ENCODE measurements at regions of chr7 and their contacts with region 1.

Region 1: GRCh38 chr7:149090397-149091195 is at the start of gene ZNF786:
- DNase-seq: peak; percentile 70 to 73
- ATAC-seq: peak; percentile 91 to 94
- H3K4me3 ChIP-seq: peak within 1 kb of the TSS; percentile 95 to 99 (median 96)
- H3K27ac ChIP-seq: peak within 1 kb of the TSS; percentile 90 to 100 (median 94)
- H3K4me1 ChIP-seq: peaks cover 6 to 10% of the 10 kb centered on the region in 2 donors
- H3K27me3 ChIP-seq: no peaks in the 10 kb centered on the region
- CTCF ChIP-seq: peak; percentile 86 to 98 (median 94)
- POLR2A ChIP-seq: peak; percentile 67 to 81
- total RNA-seq, gene ZNF786: 1.9 to 6.1 (median 2.7) TPM

Region 2: GRCh38 chr7:148698397-148699023 is 392.1 kb before region 1 on chr7 and contains the start of gene CUL1:
- in situ Hi-C with region 1: no loop called
- intact Hi-C with region 1: loop called (anchors 5 kb)
- DNase-seq: peak; percentile 75 to 82
- ATAC-seq: peak; percentile 74 to 82
- H3K4me3 ChIP-seq: peak within 1 kb of the TSS; percentile 56 to 81 (median 72)
- H3K27ac ChIP-seq: peak within 1 kb of the TSS; percentile 85 to 96 (median 92)
- H3K4me1 ChIP-seq: peaks cover 34 to 35% of the 10 kb centered on the region in 2 donors
- H3K27me3 ChIP-seq: no peaks in the 10 kb centered on the region
- CTCF ChIP-seq: no peak
- POLR2A ChIP-seq: peak; percentile 68 to 72
- total RNA-seq, gene CUL1: 78.7 to 101 (median 84.6) TPM

Region 3: DNA sequence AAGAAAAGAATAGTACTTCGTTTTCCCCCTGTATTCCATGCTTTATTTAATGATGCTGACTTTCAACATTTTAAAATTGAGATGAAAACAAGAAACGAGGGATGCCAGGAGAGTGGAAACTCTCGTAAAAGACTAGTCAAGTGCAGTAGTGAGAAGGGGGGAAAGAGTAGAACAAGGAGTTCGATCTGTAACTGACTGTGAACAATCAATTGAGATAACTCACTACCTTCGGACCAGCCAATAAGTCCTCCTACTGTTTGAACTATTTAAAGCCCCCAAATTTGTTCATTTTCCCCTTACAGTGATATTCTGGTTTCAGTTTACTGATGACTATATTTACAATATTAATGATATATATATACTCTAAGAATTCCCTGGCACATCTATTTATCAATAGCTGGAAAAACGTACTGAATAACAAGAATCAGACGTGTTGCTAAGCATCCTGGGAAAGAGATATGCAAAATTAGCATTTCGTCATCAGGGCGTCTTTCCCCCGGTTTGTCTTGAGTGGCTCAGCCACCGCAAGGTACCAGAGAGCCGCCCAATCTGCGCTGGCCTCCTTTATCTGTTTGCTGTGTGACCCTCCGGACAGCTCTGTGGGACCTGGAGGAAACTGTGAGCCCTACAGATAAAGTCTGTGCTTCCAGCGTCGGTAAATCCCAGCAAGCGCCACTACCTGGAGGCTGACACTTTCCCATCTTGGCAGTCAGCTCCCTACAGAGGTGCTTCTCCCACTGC is 103.4 kb before region 1 on chr7:
- in situ Hi-C with region 1: no loop called
- intact Hi-C with region 1: loop called (anchors 1 kb)
- DNase-seq: peak; percentile 73 to 76
- ATAC-seq: peak; percentile 92 to 94
- H3K4me3 ChIP-seq: peak overlapping the region; percentile 68 to 85 (median 70)
- H3K27ac ChIP-seq: peak overlapping the region; percentile 70 to 82 (median 76)
- H3K4me1 ChIP-seq: peaks cover 24 to 37% of the 10 kb centered on the region in 2 donors
- H3K27me3 ChIP-seq: no peaks in the 10 kb centered on the region
- CTCF ChIP-seq: no peak
- POLR2A ChIP-seq: no peak

Region 4: GRCh38 chr7:149028346-149029109 is 62.1 kb before region 1 on chr7 and contains the start of gene PDIA4:
- in situ Hi-C with region 1: loop called in 1 of 4 experiments (anchors 5 kb)
- intact Hi-C with region 1: loop called (anchors 1 kb)
- DNase-seq: peak; percentile 99
- ATAC-seq: peak; percentile 97
- H3K4me3 ChIP-seq: peak within 1 kb of the TSS; percentile 70 to 93 (median 86)
- H3K27ac ChIP-seq: peak within 1 kb of the TSS; percentile 83 to 98 (median 94)
- H3K4me1 ChIP-seq: peaks cover 16 to 21% of the 10 kb centered on the region in 2 donors
- H3K27me3 ChIP-seq: no peaks in the 10 kb centered on the region
- CTCF ChIP-seq: peak in 4 of 5 experiments; percentile 34 to 44 (median 40)
- POLR2A ChIP-seq: peak; percentile 72 to 94
- total RNA-seq, gene PDIA4: 10.8 to 19.6 (median 14.2) TPM

Region 5: DNA sequence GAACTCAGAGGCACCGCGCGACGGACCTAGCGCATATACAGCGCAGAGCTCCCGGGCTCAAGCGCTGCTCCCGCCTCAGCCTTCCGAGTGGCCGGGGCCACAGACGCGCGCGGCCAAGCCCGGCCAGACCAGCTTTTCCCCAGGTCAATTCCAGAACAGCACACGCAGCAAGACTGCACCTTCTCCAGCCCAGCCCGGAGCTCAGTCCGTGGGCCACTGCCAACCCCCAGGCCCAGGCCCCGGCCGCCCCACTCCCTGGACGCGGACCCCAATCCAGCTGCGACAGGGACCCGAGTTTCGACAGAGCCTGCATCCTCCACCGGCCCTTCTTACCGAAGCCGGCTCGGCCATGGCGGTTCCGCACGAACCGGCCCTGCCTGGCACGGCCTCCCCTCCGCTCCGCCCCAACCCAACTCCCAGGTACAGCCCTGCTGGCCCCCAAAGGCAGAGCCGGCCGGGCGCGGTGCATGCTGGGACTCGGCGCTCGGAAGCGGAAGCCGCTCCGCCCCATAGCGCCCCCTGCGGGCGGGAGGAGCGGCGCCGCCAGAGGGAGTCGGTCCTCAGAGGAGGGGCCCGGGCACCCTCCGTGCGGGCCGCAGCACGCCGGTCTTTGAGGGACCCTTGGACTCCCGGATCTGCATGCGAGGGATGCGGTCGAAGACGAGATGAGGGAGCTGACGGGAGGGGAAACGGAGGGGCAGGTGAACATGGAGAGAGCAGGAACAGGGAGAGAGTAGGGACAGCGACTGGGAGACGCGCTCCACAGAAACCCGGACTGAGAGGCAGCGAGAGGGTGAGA is 35.5 kb after region 1 on chr7 and contains the start of gene ZNF425:
- in situ Hi-C with region 1: no loop called
- intact Hi-C with region 1: loop called (anchors 1 kb)
- DNase-seq: peak; percentile 80 to 85
- ATAC-seq: peak; percentile 92 to 93
- H3K4me3 ChIP-seq: peak within 1 kb of the TSS; percentile 79 to 100 (median 96)
- H3K27ac ChIP-seq: peak within 1 kb of the TSS; percentile 94 to 98 (median 96)
- H3K4me1 ChIP-seq: peaks cover 9% of the 10 kb centered on the region in 2 donors
- H3K27me3 ChIP-seq: no peaks in the 10 kb centered on the region
- CTCF ChIP-seq: peak; percentile 96 to 99 (median 97)
- POLR2A ChIP-seq: peak; percentile 84 to 91
- total RNA-seq, gene ZNF425: 1.2 to 3.2 (median 1.5) TPM

Region 6: GRCh38 chr7:149195180-149196150 is 104.9 kb after region 1 on chr7 and contains the start of gene ZNF282:
- in situ Hi-C with region 1: no loop called
- intact Hi-C with region 1: no loop called
- DNase-seq: peak; percentile 74 to 87
- ATAC-seq: peak; percentile 95 to 96
- H3K4me3 ChIP-seq: peak within 1 kb of the TSS; percentile 76 to 87 (median 80)
- H3K27ac ChIP-seq: peak within 1 kb of the TSS; percentile 80 to 96 (median 86)
- H3K4me1 ChIP-seq: peaks cover 9 to 17% of the 10 kb centered on the region in 2 donors
- H3K27me3 ChIP-seq: peaks cover 0 to 2% (median 0%) of the 10 kb centered on the region in 3 donors
- CTCF ChIP-seq: peak in 4 of 5 experiments; percentile 33 to 71 (median 54)
- POLR2A ChIP-seq: peak; percentile 41 to 43
- total RNA-seq, gene ZNF282: 16.8 to 24.1 (median 23.0) TPM